Left ventricle myocardium superior (tissue), 1 donor: ENCODE measurements at regions of chr5 and their contacts with region 1.

Region 1: DNA sequence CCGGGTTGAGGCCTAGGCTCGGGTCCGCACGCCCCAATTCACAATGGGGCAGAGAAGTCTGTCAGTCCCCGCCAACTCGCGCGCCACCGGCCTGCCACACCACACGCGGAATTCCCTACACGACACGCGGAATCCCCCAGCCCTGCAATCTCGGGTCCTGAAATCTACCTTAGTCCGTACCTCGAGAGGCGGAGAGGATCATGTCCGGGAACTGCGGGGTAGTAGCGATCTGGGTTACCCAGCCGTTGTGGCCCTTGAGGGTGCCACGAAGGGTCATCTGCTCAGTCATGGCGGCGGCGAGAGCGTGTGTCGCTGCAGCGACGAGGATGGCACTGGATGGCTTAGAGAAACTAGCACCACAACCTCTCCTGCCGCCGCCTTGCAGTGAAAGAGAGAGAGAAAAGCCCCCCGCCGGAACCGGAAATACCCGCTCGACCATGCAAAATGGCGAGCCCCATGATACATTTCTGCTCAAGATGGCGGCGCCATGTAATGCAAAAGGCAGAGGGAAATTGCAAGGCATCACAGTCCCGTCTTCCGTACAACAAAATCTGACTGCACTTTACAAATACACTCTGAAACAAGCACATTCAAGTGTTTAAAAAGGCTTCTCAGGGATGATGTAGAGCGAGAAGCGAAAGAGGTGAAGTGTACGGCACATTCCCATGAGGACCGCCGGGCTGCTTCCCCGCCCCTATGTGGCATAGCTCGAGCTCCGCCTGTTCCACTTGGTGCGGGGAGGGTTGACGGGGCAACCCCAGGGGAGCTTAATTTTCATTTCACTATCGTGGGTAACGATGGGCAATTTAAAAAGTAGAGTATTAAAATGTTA is at the start of gene RACK1:
- DNase-seq: peak; percentile 89
- ATAC-seq: peak; percentile 70
- total RNA-seq, gene RACK1: 641 TPM

Region 2: DNA sequence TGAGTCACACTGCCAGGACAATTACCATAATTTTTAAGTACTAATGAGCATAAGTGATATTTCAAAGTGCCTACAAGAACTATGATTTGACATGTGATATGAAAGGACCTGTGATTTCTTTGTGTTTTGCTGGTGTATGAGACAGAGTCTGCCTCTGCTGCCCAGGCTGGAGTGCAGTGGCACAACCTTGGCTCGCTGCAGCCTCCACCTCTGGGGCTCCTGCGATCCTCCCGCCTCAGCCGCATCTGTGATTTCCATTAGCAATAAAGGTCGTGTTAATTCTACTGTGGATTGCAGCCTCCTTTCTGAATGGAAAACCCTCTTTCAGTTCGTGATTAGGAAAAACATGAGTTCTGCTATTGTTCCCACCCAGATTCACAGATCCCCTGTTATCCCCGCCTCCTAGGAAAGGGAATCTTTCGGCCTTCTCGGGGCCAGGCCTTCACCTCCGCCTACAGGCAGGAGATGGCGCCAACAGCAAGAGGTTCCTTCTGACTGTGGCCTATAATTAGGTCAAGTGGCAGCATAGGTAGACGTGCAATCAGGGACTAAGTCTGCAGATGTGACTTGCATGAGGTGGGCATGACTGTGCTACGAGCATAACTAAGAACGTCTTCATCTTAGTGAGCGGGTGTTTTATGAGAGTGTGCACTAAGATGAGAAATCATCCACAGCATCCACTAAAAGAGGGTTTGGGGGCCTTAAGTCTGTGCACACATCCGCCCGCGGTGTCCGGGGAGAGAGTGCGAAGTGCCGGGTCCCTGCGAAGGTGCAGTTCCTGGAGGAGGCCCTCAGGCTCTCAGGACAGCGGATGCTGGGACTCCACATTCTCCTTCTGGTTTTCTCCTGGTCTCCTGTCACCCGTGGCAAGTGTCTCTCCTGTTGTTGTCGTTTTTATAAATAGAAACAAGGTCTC is 61.8 kb before region 1 on chr5:
- intact Hi-C with region 1: loop called (anchors 10 kb)
- DNase-seq: peak; percentile 77
- ATAC-seq: peak; percentile 87